OCI-LY7 (cell line): ENCODE measurements at regions of chr22 and their contacts with region 1.

Region 1: DNA sequence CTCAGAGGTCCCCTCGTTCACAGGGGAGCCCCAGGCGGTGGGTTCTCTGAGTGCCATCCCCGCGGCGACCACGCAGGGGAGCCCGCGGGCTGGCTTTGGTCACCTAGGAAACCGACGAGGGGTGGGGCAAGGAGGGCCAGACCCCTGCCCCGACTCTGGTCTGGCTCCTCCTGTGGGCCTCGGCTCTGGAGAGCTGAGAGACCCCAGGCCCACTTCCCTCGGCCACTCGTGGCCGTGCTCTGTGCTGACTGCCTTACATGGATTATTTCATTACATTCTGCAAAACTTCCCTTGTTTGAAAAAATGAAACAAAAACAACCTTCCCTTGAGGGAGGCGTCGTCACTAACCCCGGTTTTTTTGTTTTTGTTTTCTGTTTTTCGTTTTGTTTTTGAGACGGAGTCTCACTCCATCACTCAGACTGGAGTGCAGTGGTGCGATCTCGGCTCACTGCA is 15.1 kb upstream of the CYTH4 start:
- DNase-seq: peak; percentile 78
- H3K4me3 ChIP-seq: peak overlapping the region; percentile 65
- H3K27ac ChIP-seq: peak overlapping the region; percentile 22
- H3K4me1 ChIP-seq: peaks cover 32% of the 10 kb centered on the region
- CTCF ChIP-seq: peak; percentile 95

Region 2: GRCh38 chr22:37019309-37020125 is 247.6 kb before region 1 on chr22 and contains the starts of genes MPST and TST:
- CTCF ChIA-PET with region 1: no interaction called
- POLR2A ChIA-PET with region 1: no interaction called
- intact Hi-C with region 1: no loop called
- DNase-seq: peak; percentile 86
- H3K4me3 ChIP-seq: peak within 1 kb of the TSS; percentile 90
- H3K27ac ChIP-seq: peak within 1 kb of the TSS; percentile 46
- H3K4me1 ChIP-seq: peaks cover 13% of the 10 kb centered on the region
- CTCF ChIP-seq: peak; percentile 24; the same call in 1 of the 2 replicates
- total RNA-seq, gene MPST: 105 and 124 TPM in 2 replicates
- total RNA-seq, gene TST: 36.0 and 37.6 TPM in 2 replicates

Region 3: GRCh38 chr22:37282385-37282677 is 15.2 kb after region 1 on chr22 and contains the start of gene CYTH4:
- CTCF ChIA-PET with region 1: no interaction called
- POLR2A ChIA-PET with region 1: interaction called, 3 read pairs
- intact Hi-C with region 1: loop called (anchors 1 kb)
- DNase-seq: peak; percentile 82
- H3K4me3 ChIP-seq: peak within 1 kb of the TSS; percentile 80
- H3K27ac ChIP-seq: peak within 1 kb of the TSS; percentile 89
- H3K4me1 ChIP-seq: peaks cover 60% of the 10 kb centered on the region
- CTCF ChIP-seq: no peak
- total RNA-seq, gene CYTH4: 20.6 and 35.0 TPM in 2 replicates

Region 4: GRCh38 chr22:37428649-37429586 is 161.8 kb after region 1 on chr22:
- CTCF ChIA-PET with region 1: no interaction called
- POLR2A ChIA-PET with region 1: no interaction called
- intact Hi-C with region 1: loop called (anchors 1 kb)
- DNase-seq: peak; percentile 75
- H3K4me3 ChIP-seq: no peak overlapping the region
- H3K27ac ChIP-seq: no peak overlapping the region
- H3K4me1 ChIP-seq: no peaks in the 10 kb centered on the region
- CTCF ChIP-seq: peak; percentile 95

Region 5: GRCh38 chr22:37457093-37457893 is 190.1 kb after region 1 on chr22:
- CTCF ChIA-PET with region 1: interaction called, 4 read pairs
- POLR2A ChIA-PET with region 1: no interaction called
- intact Hi-C with region 1: loop called (anchors 1 kb)
- DNase-seq: peak; percentile 78
- H3K4me3 ChIP-seq: no peak overlapping the region
- H3K27ac ChIP-seq: no peak overlapping the region
- H3K4me1 ChIP-seq: peaks cover 9% of the 10 kb centered on the region
- CTCF ChIP-seq: peak; percentile 99